GM10248 (cell line): ENCODE measurements at regions of chr7 and their contacts with region 1.

Region 1: GRCh38 chr7:30564243-30564892 is 30.3 kb upstream of the GARS1 start:
- DNase-seq: peak; percentile 82
- CTCF ChIP-seq: peak; percentile 83

Region 2: GRCh38 chr7:30276203-30276900 is 288.0 kb before region 1 on chr7:
- CTCF ChIA-PET with region 1: interaction called, 48 read pairs
- POLR2A ChIA-PET with region 1: interaction called, 3 read pairs
- DNase-seq: peak; percentile 55
- CTCF ChIP-seq: peak; percentile 66

Region 3: GRCh38 chr7:30510124-30511075 is 54.0 kb before region 1 on chr7:
- CTCF ChIA-PET with region 1: interaction called, 53 read pairs
- POLR2A ChIA-PET with region 1: no interaction called
- DNase-seq: no peak
- CTCF ChIP-seq: peak; percentile 84

Region 4: GRCh38 chr7:30533886-30534285 is 30.5 kb before region 1 on chr7:
- CTCF ChIA-PET with region 1: interaction called, 15 read pairs
- POLR2A ChIA-PET with region 1: no interaction called
- DNase-seq: no peak
- CTCF ChIP-seq: no peak

Region 5: DNA sequence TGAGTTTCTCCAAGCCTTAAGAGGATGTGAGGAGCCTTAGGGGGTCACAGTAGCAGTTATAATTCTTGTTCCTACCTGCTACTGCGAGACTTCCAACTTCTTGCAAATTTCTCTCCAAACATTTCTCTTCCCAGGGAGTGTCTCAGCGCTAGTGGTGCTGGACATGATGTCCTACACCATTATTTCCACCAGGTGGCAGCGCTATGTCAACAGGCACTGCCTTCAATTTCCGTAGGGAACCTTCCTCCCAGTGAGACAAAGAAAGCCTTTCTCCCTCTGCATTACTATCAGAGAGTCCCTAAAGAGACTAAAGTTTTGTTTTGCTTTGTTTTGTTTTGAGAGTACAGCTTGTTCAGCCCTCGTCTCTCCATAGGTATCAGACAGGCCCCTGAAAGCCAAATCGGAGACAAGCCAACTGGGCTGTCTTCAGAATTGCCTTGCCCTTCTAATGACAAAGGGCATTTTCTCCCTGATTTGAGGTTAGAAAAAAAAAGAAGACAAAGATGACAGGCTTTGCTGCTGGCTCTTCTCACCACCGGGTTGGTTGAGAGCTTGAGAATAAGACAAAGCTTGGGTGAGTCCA is 15.5 kb before region 1 on chr7:
- CTCF ChIA-PET with region 1: interaction called, 107 read pairs
- POLR2A ChIA-PET with region 1: no interaction called
- DNase-seq: peak; percentile 56
- CTCF ChIP-seq: peak; percentile 62